ENCODE measurements at regions of chr9 and their contacts with region 1.

Region 1: GRCh38 chr9:85702726-85703289 is 38.9 kb downstream of the AGTPBP1 start:
- DNase-seq: no peak

Region 2: DNA sequence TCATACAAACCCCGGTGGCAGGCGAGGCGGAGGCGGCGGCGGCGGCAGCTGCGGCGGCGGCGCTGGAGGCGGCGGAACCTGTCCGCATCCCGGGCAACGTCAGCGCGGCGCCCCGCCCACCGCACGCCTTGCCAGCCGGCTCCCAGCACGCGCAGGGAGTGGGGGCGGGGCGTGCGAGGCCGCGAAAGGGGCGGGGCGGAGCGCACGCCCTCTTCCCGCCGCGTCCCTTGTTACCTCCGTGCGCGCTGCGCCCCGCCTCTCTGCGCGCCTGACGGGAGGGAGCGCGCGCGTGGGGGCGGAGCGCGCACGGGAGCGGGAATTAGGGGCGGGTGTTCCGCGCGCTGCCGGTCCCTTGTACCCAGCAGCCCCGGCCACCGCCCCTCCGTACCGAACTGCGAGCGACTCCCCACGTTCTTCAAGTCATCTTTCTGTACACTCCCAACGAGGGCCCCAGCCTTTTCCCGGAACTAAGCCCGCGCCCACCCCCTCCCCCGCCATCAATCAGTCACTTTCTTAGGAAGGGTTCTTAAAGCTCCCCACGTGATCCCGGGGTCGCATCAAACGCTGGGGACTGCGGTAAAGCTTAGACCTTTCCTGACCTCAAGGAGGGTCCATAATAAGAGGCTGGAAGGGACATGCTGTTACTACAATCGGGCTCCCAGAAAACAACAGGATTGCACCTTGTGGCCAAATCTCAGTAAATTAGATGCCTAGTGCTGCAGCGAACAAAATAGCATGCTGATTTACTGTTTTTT is 39.2 kb after region 1 on chr9 and contains the start of gene AGTPBP1:
- intact Hi-C with region 1: loop called (anchors 1 kb)
- DNase-seq: peak; percentile 86 to 99 (median 92)